Ascending aorta (tissue), 2 donors: ENCODE measurements at regions of chr4 and their contacts with region 1.

Region 1: GRCh38 chr4:156946516-156947424 is 24.8 kb downstream of the PDGFC start:
- DNase-seq: peak in 1 of 2 donors; percentile 85
- H3K4me3 ChIP-seq: peak overlapping the region in 1 of 2 donors; percentile 3
- H3K27ac ChIP-seq: peak overlapping the region; percentile 83 to 87
- H3K4me1 ChIP-seq: peaks cover 4 to 44% of the 10 kb centered on the region in 2 donors
- H3K27me3 ChIP-seq: no peaks in the 10 kb centered on the region
- CTCF ChIP-seq: no peak

Region 2: GRCh38 chr4:156771171-156771837 is 175.5 kb before region 1 on chr4:
- intact Hi-C with region 1: loop called (anchors 5 kb)
- DNase-seq: peak in 1 of 2 donors; percentile 73
- H3K4me3 ChIP-seq: peak overlapping the region; percentile 24 to 43
- H3K27ac ChIP-seq: peak overlapping the region; percentile 73 to 80
- H3K4me1 ChIP-seq: peaks cover 6 to 50% of the 10 kb centered on the region in 2 donors
- H3K27me3 ChIP-seq: no peaks in the 10 kb centered on the region
- CTCF ChIP-seq: no peak

Region 3: GRCh38 chr4:156829201-156829873 is 117.4 kb before region 1 on chr4:
- intact Hi-C with region 1: loop called (anchors 5 kb)
- DNase-seq: peak in 1 of 2 donors; percentile 72
- H3K4me3 ChIP-seq: peak overlapping the region; percentile 41 to 43
- H3K27ac ChIP-seq: peak overlapping the region; percentile 65 to 73
- H3K4me1 ChIP-seq: peaks cover 0 to 13% of the 10 kb centered on the region in 2 donors
- H3K27me3 ChIP-seq: no peaks in the 10 kb centered on the region
- CTCF ChIP-seq: no peak

Region 4: DNA sequence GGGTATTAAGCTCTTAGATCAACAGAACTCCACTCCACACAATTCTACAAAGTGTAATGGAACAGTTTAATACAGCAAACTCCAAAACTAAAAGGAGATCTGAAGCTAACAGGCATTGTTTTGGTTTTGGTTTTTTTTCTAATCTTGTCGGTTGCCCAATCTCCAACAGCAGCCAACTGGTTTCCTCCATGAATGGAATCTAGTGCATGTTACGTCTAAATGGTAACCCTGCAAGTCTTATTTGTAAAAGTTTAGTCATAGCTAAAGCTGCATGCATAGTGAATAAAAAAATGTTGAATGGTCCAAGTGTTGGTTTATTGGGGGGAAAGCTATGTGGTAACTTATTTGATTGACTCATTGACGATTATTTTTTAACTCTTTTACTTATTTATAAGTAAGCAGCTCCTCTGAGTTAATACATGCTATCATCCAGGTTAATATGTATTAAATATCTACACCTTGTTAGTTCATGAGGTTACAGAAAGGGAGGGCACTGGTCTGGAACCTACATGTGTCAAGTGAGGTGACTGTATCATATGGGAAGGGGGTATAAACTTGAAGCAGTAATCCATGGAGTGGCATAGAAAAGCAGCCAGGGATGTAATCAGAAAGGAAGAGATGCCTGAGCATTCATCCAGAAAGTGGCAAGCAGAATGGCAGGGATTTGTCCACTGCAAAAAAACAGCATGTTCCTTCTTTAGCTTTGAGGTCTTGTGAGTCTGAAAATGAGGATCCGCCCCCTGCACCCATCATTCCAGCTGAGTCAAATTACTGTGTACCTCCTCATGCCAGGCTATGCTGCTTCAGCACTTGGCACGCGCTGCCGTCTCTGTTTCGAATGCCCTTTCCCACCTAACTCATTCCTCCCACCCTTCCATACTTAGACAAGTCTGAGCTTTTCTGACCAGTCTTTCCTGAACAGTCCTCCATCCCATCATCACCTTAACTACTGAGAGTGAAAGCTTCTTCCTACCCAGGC is 56.9 kb before region 1 on chr4:
- intact Hi-C with region 1: loop called (anchors 5 kb)
- DNase-seq: peak; percentile 40 to 65
- H3K4me3 ChIP-seq: no peak overlapping the region
- H3K27ac ChIP-seq: peak overlapping the region; percentile 46 to 56
- H3K4me1 ChIP-seq: peaks cover 3 to 10% of the 10 kb centered on the region in 2 donors
- H3K27me3 ChIP-seq: no peaks in the 10 kb centered on the region
- CTCF ChIP-seq: no peak

Region 5: GRCh38 chr4:156983366-156983765 is 36.6 kb after region 1 on chr4:
- intact Hi-C with region 1: no loop called
- DNase-seq: no peak
- H3K4me3 ChIP-seq: no peak overlapping the region
- H3K27ac ChIP-seq: no peak overlapping the region
- H3K4me1 ChIP-seq: no peaks in the 10 kb centered on the region
- H3K27me3 ChIP-seq: no peaks in the 10 kb centered on the region
- CTCF ChIP-seq: peak in 2 of 3 experiments; percentile 34 to 37